Activated B cell treated with CpG ODN at 0.5 μM for 24 hours (primary cell): ENCODE measurements at regions of chr20 and their contacts with region 1.

Region 1: DNA sequence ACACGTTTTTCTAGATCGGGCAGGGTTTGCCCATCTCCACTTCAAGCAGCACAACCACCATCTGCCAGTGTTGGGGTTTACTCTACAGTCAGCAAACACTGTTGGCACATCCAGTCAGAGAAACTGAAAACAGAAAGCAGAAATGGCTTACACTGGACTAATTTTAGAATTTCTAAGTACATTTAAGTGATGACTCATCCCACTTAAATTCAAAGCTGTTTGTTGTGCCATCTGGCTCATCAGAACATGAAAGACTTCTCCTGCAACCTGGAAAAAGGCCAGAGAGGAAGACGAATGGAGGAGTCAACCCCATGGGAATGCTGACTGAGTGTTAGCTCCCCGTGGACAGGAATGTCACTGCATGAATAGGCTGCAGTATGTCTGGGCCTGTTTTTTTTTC is 21.8 kb downstream of the FAM209B start:
- DNase-seq: no peak
- ATAC-seq: peak; percentile 40
- H3K4me3 Mint-ChIP-seq: no peak overlapping the region
- H3K27ac Mint-ChIP-seq: no peak overlapping the region
- H3K4me1 Mint-ChIP-seq: peaks cover 8% of the 10 kb centered on the region
- H3K27me3 Mint-ChIP-seq: peaks cover 2% of the 10 kb centered on the region
- CTCF ChIP-seq: no peak

Region 2: DNA sequence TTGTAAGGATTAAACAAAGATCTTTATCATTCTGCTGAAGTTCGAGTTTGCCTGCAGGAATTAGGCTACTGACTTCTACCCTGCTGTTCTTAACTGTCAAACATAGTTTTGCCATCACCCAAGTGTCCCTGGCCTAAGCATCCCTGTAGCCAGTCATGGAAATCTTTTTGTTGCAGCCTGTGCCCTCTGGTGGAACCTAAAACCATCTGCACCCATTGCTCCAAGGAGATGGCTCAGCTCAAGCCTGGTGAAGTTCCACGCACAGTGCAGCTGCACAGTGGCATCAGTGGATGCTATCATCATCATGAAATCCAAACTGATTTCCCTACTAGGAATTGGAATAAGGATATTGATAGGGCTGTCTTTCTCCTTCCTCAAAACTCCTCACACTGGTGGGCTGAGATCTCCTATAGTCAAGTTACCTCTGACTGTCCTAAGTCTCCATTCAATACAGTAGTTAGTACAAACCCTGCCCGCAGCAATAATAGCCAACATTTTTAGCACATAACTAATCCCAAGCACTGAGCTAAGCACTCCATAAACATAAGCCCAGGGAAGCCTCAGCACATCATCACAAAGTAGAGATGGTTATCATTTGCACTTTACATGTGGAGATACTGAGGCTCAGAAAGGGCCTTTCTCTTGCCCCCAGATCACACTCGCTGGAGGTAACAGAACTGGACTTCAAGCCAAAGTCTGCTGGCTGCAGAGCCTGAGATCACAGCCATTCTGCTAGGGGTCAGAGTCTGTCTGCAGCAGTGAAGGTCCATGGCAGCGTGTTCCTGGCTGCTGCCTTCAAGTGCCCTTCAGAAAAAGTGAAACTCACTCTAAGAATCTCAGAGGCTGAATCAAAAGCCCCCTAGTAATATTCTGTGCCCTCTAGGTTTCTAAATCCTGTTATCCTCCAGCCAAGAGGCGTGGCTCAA is 383.5 kb before region 1 on chr20:
- CTCF ChIA-PET with region 1: no interaction called
- POLR2A ChIA-PET with region 1: no interaction called
- intact Hi-C with region 1: no loop called
- DNase-seq: no peak
- ATAC-seq: no peak
- H3K4me3 Mint-ChIP-seq: no peak overlapping the region
- H3K27ac Mint-ChIP-seq: no peak overlapping the region
- H3K4me1 Mint-ChIP-seq: no peaks in the 10 kb centered on the region
- H3K27me3 Mint-ChIP-seq: no peaks in the 10 kb centered on the region
- CTCF ChIP-seq: no peak

Region 3: GRCh38 chr20:56517641-56518040 is 37.2 kb before region 1 on chr20:
- CTCF ChIA-PET with region 1: no interaction called
- POLR2A ChIA-PET with region 1: no interaction called
- intact Hi-C with region 1: no loop called
- DNase-seq: no peak
- ATAC-seq: no peak
- H3K4me3 Mint-ChIP-seq: no peak overlapping the region
- H3K27ac Mint-ChIP-seq: no peak overlapping the region
- H3K4me1 Mint-ChIP-seq: no peaks in the 10 kb centered on the region
- H3K27me3 Mint-ChIP-seq: no peaks in the 10 kb centered on the region
- CTCF ChIP-seq: no peak

Region 4: GRCh38 chr20:56574531-56575142 is 19.8 kb after region 1 on chr20:
- CTCF ChIA-PET with region 1: interaction called, 9 read pairs
- POLR2A ChIA-PET with region 1: no interaction called
- intact Hi-C with region 1: loop called (anchors 1 kb)
- DNase-seq: no peak
- ATAC-seq: no peak
- H3K4me3 Mint-ChIP-seq: no peak overlapping the region
- H3K27ac Mint-ChIP-seq: no peak overlapping the region
- H3K4me1 Mint-ChIP-seq: no peaks in the 10 kb centered on the region
- H3K27me3 Mint-ChIP-seq: peaks cover 12% of the 10 kb centered on the region
- CTCF ChIP-seq: no peak

Region 5: GRCh38 chr20:56995576-56996075 is 440.8 kb after region 1 on chr20:
- CTCF ChIA-PET with region 1: interaction called, 11 read pairs
- POLR2A ChIA-PET with region 1: no interaction called
- intact Hi-C with region 1: no loop called
- DNase-seq: no peak
- ATAC-seq: no peak
- H3K4me3 Mint-ChIP-seq: no peak overlapping the region
- H3K27ac Mint-ChIP-seq: no peak overlapping the region
- H3K4me1 Mint-ChIP-seq: no peaks in the 10 kb centered on the region
- H3K27me3 Mint-ChIP-seq: peaks cover 11% of the 10 kb centered on the region
- CTCF ChIP-seq: no peak